ENCODE measurements at regions of chr18 and their contacts with region 1.

Region 1: GRCh38 chr18:77132371-77133050 is at the start of gene MBP:
- DNase-seq: peak; percentile 58 to 75 (median 68)
- ATAC-seq: peak; percentile 49
- H3K4me3 ChIP-seq: peak within 1 kb of the TSS; percentile 66
- H3K4me3 Mint-ChIP-seq: peak within 1 kb of the TSS; percentile 94 to 100 (median 97)
- H3K27ac ChIP-seq: peak within 1 kb of the TSS; percentile 87
- H3K27ac Mint-ChIP-seq: peak within 1 kb of the TSS; percentile 76 to 97 (median 96)
- H3K4me1 ChIP-seq: peaks cover 34 to 47% of the 10 kb centered on the region in 2 donors
- H3K4me1 Mint-ChIP-seq: peaks cover 43 to 66% (median 59%) of the 10 kb centered on the region in 7 donors
- H3K27me3 ChIP-seq: no peaks in the 10 kb centered on the region
- H3K27me3 Mint-ChIP-seq: no peaks in the 10 kb centered on the region
- total RNA-seq, gene MBP: 88.3 to 152 (median 116) TPM

Region 2: DNA sequence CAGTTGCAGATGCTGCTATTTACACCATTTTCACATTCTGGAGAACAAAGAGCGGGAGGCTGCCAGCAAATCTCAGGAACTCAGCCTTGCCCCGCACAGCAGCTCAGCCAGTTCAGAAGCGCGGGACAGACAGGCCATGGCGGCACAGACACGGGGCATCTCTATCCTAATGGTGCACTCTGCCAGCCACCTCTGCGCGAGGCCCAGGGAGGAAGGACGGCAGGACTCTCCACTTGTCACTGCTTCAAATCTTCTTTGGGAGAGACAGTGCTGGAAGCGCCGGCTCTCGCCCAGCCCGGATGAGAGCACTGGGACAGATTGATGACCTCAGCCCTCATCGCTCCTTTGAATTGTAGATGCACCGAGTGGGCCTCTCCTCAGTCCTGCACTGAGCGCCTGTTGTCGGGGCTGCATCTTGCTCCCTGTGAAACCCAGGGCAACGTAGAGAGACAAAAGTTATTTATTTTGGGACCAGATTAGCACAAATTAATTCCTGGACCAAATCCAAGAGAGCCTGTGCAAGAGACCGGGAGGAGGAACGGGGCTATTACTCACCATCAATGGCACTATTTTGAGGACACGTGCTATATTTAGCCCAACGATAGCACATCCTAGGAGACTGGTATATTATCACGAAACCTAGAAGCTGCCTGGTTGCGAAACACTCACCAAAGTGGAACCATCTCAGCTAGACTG is 1493.6 kb before region 1 on chr18:
- CTCF ChIA-PET with region 1: no interaction called
- POLR2A ChIA-PET with region 1: no interaction called
- intact Hi-C with region 1: no loop called
- DNase-seq: no peak
- ATAC-seq: no peak
- H3K4me3 ChIP-seq: no peak overlapping the region
- H3K4me3 Mint-ChIP-seq: no peak overlapping the region
- H3K27ac ChIP-seq: no peak overlapping the region
- H3K27ac Mint-ChIP-seq: no peak overlapping the region
- H3K4me1 ChIP-seq: no peaks in the 10 kb centered on the region
- H3K4me1 Mint-ChIP-seq: peaks cover 0 to 2% (median 0%) of the 10 kb centered on the region in 7 donors
- H3K27me3 ChIP-seq: no peaks in the 10 kb centered on the region
- H3K27me3 Mint-ChIP-seq: peaks cover 0 to 24% (median 5%) of the 10 kb centered on the region in 5 donors

Region 3: GRCh38 chr18:76822510-76823160 is 309.9 kb before region 1 on chr18 and contains the start of gene ZNF236:
- CTCF ChIA-PET with region 1: no interaction called
- POLR2A ChIA-PET with region 1: interaction called, 5 read pairs
- intact Hi-C with region 1: loop called (anchors 2 kb)
- DNase-seq: peak; percentile 38 to 78 (median 61)
- ATAC-seq: peak; percentile 76
- H3K4me3 ChIP-seq: peak within 1 kb of the TSS; percentile 99
- H3K4me3 Mint-ChIP-seq: peak within 1 kb of the TSS; percentile 88 to 96 (median 93)
- H3K27ac ChIP-seq: peak within 1 kb of the TSS; percentile 84
- H3K27ac Mint-ChIP-seq: peak within 1 kb of the TSS; percentile 89 to 97 (median 96)
- H3K4me1 ChIP-seq: peaks cover 8 to 10% of the 10 kb centered on the region in 2 donors
- H3K4me1 Mint-ChIP-seq: peaks cover 38 to 65% (median 56%) of the 10 kb centered on the region in 7 donors
- H3K27me3 ChIP-seq: no peaks in the 10 kb centered on the region
- H3K27me3 Mint-ChIP-seq: no peaks in the 10 kb centered on the region
- total RNA-seq, gene ZNF236: 25.9 to 34.5 (median 30.6) TPM

Region 4: DNA sequence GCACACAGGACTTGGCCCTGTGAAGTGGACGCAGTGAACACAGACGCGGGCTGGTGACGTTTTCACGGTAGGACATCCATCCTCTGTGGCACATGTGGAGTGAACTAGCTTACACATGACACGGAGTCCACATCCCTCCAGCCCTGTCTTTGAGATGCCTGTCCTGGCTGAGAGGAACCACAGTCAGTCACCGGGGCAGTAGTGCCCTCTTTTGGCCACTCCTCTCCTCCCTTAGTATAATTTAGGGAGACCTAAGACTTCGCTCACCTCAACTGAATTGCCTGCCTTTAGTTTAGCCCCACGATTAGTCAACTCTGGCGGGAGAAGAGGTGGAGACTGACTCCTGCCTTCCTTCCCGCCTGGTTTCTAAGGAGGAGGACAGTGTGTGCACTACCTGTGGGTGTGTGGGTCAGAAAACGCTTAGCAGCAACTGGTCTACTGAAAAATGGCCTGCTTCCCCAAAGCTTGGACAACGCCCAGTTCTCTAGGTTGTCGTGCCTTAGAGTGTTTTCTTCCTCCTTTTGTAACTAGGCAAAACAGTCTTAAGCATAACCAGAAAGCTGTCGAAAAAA is 70.5 kb before region 1 on chr18:
- CTCF ChIA-PET with region 1: interaction called, 4 read pairs
- POLR2A ChIA-PET with region 1: interaction called, 15 read pairs
- intact Hi-C with region 1: loop called (anchors 1 kb)
- DNase-seq: peak in 1 of 9 donors; percentile 32
- ATAC-seq: peak; percentile 64
- H3K4me3 ChIP-seq: peak overlapping the region; percentile 16
- H3K4me3 Mint-ChIP-seq: peak overlapping the region; percentile 56 to 89 (median 74)
- H3K27ac ChIP-seq: peak overlapping the region; percentile 82
- H3K27ac Mint-ChIP-seq: peak overlapping the region; percentile 96 to 100 (median 99)
- H3K4me1 ChIP-seq: peaks cover 64 to 90% of the 10 kb centered on the region in 2 donors
- H3K4me1 Mint-ChIP-seq: peaks cover 48 to 89% (median 83%) of the 10 kb centered on the region in 7 donors
- H3K27me3 ChIP-seq: no peaks in the 10 kb centered on the region
- H3K27me3 Mint-ChIP-seq: no peaks in the 10 kb centered on the region

Region 5: GRCh38 chr18:77101410-77102258 is 30.9 kb before region 1 on chr18:
- CTCF ChIA-PET with region 1: interaction called, 4 read pairs
- POLR2A ChIA-PET with region 1: interaction called, 68 read pairs
- intact Hi-C with region 1: loop called in 1 of 2 experiments (anchors 1 kb)
- DNase-seq: peak in 2 of 9 donors; percentile 26 to 73
- ATAC-seq: peak; percentile 62
- H3K4me3 ChIP-seq: peak overlapping the region; percentile 45
- H3K4me3 Mint-ChIP-seq: peak overlapping the region; percentile 65 to 92 (median 82)
- H3K27ac ChIP-seq: peak overlapping the region; percentile 73
- H3K27ac Mint-ChIP-seq: peak overlapping the region; percentile 94 to 99 (median 98)
- H3K4me1 ChIP-seq: peaks cover 88 to 94% of the 10 kb centered on the region in 2 donors
- H3K4me1 Mint-ChIP-seq: peaks cover 71 to 100% (median 94%) of the 10 kb centered on the region in 7 donors
- H3K27me3 ChIP-seq: no peaks in the 10 kb centered on the region
- H3K27me3 Mint-ChIP-seq: no peaks in the 10 kb centered on the region

Region 6: GRCh38 chr18:77114415-77115191 is 17.9 kb before region 1 on chr18:
- CTCF ChIA-PET with region 1: no interaction called
- POLR2A ChIA-PET with region 1: interaction called, 68 read pairs
- intact Hi-C with region 1: no loop called
- DNase-seq: peak in 1 of 9 donors; percentile 35
- ATAC-seq: peak; percentile 85
- H3K4me3 ChIP-seq: no peak overlapping the region
- H3K4me3 Mint-ChIP-seq: peak overlapping the region in 9 of 10 donors; percentile 26 to 71 (median 49)
- H3K27ac ChIP-seq: peak overlapping the region; percentile 31
- H3K27ac Mint-ChIP-seq: peak overlapping the region; percentile 2 to 94 (median 89)
- H3K4me1 ChIP-seq: peaks cover 32 to 41% of the 10 kb centered on the region in 2 donors
- H3K4me1 Mint-ChIP-seq: peaks cover 69 to 93% (median 90%) of the 10 kb centered on the region in 7 donors
- H3K27me3 ChIP-seq: no peaks in the 10 kb centered on the region
- H3K27me3 Mint-ChIP-seq: no peaks in the 10 kb centered on the region

Measured in naive thymus-derived CD4-positive, alpha-beta T cell (primary cell).